ENCODE measurements at regions of chr1 and their contacts with region 1.

Region 1: GRCh38 chr1:2133039-2133878 is 61.3 kb downstream of the FAAP20 start:
- DNase-seq: peak; percentile 97 to 99
- H3K4me3 ChIP-seq: peak overlapping the region; percentile 16 to 52 (median 28); a peak in 7 of 8 replicates
- H3K27ac ChIP-seq: peak overlapping the region; percentile 22; the same call in 1 of the 2 replicates
- H3K4me1 ChIP-seq: peaks cover 0 to 20% (median 13%) of the 10 kb centered on the region in 4 experiments; a peak in 6 of 7 replicates
- H3K27me3 ChIP-seq: no peaks in the 10 kb centered on the region
- CTCF ChIP-seq: 0 out of 4 replicates have a peak, but pooled peaks of 1 of the 3 experiments have one; percentile 6
- EP300 ChIP-seq: no peak
- POLR2A ChIP-seq: peak in 1 of 2 experiments; percentile 47; a peak in 1 of 3 replicates
- RAD21 ChIP-seq: no peak

Region 2: DNA sequence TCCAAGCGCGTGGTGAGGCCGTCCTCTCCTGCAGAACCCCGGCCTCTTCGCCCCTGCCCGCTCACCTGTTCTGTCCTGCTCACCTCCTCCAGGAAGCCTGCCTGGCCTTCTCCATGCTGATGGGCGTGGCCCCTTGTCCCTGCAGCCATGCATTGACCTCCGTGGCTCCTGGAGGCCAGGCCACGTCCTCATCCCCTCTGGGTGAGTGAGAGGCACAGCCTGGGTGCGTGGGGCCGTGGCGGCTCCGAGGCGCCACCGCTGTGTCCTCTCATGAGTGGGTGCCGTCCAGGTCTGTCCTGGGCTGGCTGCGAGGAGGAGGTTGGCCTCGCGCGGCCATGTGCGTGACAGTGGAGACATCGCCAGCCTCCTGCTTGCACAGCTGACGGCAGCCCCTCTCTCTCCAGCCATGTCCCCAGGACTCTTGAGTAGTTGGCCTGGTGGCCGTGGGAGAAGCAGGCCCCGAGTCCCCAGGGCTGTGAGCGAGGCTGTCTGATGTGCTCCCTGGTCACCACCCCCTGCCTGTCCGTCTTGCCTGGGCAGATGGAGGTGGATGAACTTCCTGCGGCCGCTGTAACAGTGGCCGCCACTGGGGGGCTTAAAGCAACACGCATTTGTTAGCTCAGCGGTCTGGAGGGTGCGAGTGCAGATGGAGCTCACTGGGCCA is 24.9 kb before region 1 on chr1:
- CTCF ChIA-PET with region 1: interaction called, 58 read pairs
- POLR2A ChIA-PET with region 1: no interaction called
- DNase-seq: peak; percentile 47 to 82
- H3K4me3 ChIP-seq: no peak overlapping the region
- H3K27ac ChIP-seq: no peak overlapping the region
- H3K4me1 ChIP-seq: no peaks in the 10 kb centered on the region; a peak in 1 of 7 replicates
- H3K27me3 ChIP-seq: no peaks in the 10 kb centered on the region
- CTCF ChIP-seq: peak in 2 of 3 experiments; percentile 80 to 87; a peak in 3 of 4 replicates
- EP300 ChIP-seq: no peak
- POLR2A ChIP-seq: no peak
- RAD21 ChIP-seq: peak; percentile 69 to 79

Region 3: GRCh38 chr1:2115681-2116341 is 17.4 kb before region 1 on chr1:
- CTCF ChIA-PET with region 1: interaction called, 58 read pairs
- POLR2A ChIA-PET with region 1: interaction called, 7 read pairs
- DNase-seq: peak; percentile 51 to 76
- H3K4me3 ChIP-seq: peak overlapping the region in 3 of 4 experiments; percentile 25 to 36 (median 32); a peak in 6 of 8 replicates
- H3K27ac ChIP-seq: no peak overlapping the region; the same call in 1 of the 2 replicates
- H3K4me1 ChIP-seq: peaks cover 0 to 18% (median 13%) of the 10 kb centered on the region in 4 experiments; a peak in 6 of 7 replicates
- H3K27me3 ChIP-seq: no peaks in the 10 kb centered on the region
- CTCF ChIP-seq: no peak; a peak in 1 of 4 replicates
- EP300 ChIP-seq: no peak
- POLR2A ChIP-seq: no peak
- RAD21 ChIP-seq: no peak

Region 4: GRCh38 chr1:2163205-2163604 is 29.9 kb after region 1 on chr1:
- CTCF ChIA-PET with region 1: interaction called, 20 read pairs
- POLR2A ChIA-PET with region 1: no interaction called
- DNase-seq: no peak
- H3K4me3 ChIP-seq: no peak overlapping the region
- H3K27ac ChIP-seq: no peak overlapping the region
- H3K4me1 ChIP-seq: peaks cover 0 to 3% (median 0%) of the 10 kb centered on the region in 4 experiments; a peak in 2 of 7 replicates
- H3K27me3 ChIP-seq: no peaks in the 10 kb centered on the region
- CTCF ChIP-seq: peak in 1 of 3 experiments; percentile 14; a peak in 2 of 4 replicates
- EP300 ChIP-seq: no peak
- POLR2A ChIP-seq: no peak
- RAD21 ChIP-seq: peak; percentile 21 to 43; a peak in 2 of 4 replicates

Measured in H1 (cell line).